ENCODE measurements at regions of chr11 and their contacts with region 1.

Region 1: GRCh38 chr11:62081378-62082291 is 42.2 kb upstream of the INCENP start:
- DNase-seq: peak; percentile 71 to 78 (median 72)
- H3K4me3 ChIP-seq: peak overlapping the region in 2 of 3 experiments; percentile 4 to 52
- H3K4me3 Mint-ChIP-seq: peak overlapping the region; percentile 64 to 76
- H3K27ac ChIP-seq: no peak overlapping the region
- H3K27ac Mint-ChIP-seq: peak overlapping the region in 5 of 7 donors; percentile 62 to 86 (median 79)
- H3K4me1 ChIP-seq: peaks cover 7 to 8% of the 10 kb centered on the region in 2 donors
- H3K4me1 Mint-ChIP-seq: peaks cover 15% of the 10 kb centered on the region
- H3K27me3 ChIP-seq: no peaks in the 10 kb centered on the region
- H3K27me3 Mint-ChIP-seq: peaks cover 3 to 8% (median 5%) of the 10 kb centered on the region in 3 donors
- CTCF ChIP-seq: peak; percentile 94

Region 2: DNA sequence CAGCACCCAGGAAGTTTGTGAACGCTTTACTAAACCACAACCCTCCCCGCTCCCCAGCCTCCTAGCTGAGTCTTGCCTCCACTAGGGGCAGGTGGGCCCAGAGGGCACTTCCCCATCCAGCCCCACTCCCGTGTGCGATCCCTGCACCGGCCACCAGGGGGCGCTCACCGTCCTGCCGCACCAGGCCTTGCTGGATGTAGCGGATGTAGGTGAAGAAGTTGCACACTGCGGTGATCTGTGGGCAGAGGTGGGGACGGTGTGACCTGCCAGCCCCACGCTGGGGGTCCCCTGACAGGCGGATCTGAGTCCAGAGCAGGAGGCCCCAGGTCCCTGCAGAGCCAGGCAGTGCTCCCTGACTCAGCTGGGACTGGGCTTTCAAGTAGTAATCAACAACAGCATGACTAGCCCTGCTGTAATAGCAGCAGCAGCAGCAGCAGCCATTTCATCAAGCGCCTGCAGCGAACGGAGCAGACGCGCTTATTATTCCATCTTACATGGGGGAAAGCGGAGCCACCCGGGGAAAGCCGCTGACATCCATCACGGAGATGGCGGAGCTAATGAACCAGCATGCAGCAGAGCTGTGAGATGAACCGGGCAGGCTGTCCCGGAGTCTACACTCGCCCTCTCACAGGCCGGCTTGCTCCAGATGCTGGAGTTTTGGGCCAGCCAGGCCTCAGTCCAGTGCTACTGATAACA is 182.3 kb before region 1 on chr11:
- intact Hi-C with region 1: loop called in 1 of 2 experiments (anchors 1 kb)
- DNase-seq: peak; percentile 85 to 90 (median 89)
- H3K4me3 ChIP-seq: no peak overlapping the region
- H3K4me3 Mint-ChIP-seq: no peak overlapping the region
- H3K27ac ChIP-seq: no peak overlapping the region
- H3K27ac Mint-ChIP-seq: peak overlapping the region in 4 of 7 donors; percentile 7 to 71 (median 26)
- H3K4me1 ChIP-seq: peaks cover 0 to 21% of the 10 kb centered on the region in 2 donors
- H3K4me1 Mint-ChIP-seq: peaks cover 20% of the 10 kb centered on the region
- H3K27me3 ChIP-seq: peaks cover 0 to 6% of the 10 kb centered on the region in 2 donors
- H3K27me3 Mint-ChIP-seq: peaks cover 2 to 6% (median 6%) of the 10 kb centered on the region in 3 donors
- CTCF ChIP-seq: peak; percentile 99

Region 3: GRCh38 chr11:61947486-61948210 is 134.0 kb before region 1 on chr11:
- intact Hi-C with region 1: loop called (anchors 5 kb)
- DNase-seq: peak; percentile 68 to 83 (median 76)
- H3K4me3 ChIP-seq: no peak overlapping the region
- H3K4me3 Mint-ChIP-seq: no peak overlapping the region
- H3K27ac ChIP-seq: no peak overlapping the region
- H3K27ac Mint-ChIP-seq: no peak overlapping the region
- H3K4me1 ChIP-seq: peaks cover 10 to 12% of the 10 kb centered on the region in 2 donors
- H3K4me1 Mint-ChIP-seq: peaks cover 17% of the 10 kb centered on the region
- H3K27me3 ChIP-seq: no peaks in the 10 kb centered on the region
- H3K27me3 Mint-ChIP-seq: peaks cover 0 to 6% (median 3%) of the 10 kb centered on the region in 3 donors
- CTCF ChIP-seq: peak; percentile 90

Region 4: DNA sequence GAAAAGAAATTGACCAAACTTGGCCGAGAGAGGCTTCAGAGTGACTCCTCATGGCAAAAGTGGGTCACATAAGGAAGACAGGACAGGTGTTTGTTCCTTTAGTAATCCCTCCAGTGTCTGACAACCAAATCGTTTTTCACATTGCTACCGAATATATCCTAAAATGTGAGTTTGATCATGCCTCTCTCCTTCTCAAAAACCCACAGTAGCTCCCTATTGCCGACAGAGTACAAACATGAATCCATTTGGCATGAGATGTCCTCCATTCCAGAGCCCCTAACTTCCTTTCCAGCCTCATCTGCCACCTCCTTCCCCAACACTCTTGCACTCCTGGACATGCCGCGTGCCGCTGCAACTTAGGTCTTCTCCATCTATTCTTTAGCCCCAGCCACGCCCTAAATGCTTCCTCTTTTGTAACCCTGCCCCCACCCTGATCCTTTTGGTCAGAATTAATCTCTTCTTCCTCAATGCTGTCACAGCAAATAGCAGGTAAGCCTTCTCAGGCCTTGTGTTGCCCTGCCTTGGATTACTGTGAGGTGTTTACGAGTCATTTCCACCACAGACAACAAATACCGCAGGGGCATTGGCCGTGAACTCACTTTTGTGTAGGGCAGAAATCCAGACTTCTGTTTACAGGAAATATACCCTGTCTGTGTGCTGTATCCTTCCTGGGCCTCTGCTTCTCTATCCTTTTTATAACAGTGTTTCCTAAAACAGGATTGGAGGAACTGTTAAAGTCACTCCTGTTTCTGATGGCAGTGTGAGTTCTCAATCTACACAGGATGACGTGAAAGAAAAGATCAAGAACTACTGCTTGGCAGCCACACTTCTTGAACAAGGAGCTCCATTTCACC is 48.2 kb before region 1 on chr11:
- intact Hi-C with region 1: loop called in 1 of 2 experiments (anchors 5 kb)
- DNase-seq: peak; percentile 90 to 92 (median 91)
- H3K4me3 ChIP-seq: peak overlapping the region in 1 of 3 experiments; percentile 15
- H3K4me3 Mint-ChIP-seq: peak overlapping the region; percentile 68 to 70
- H3K27ac ChIP-seq: peak overlapping the region; percentile 82 to 94
- H3K27ac Mint-ChIP-seq: peak overlapping the region; percentile 85 to 98 (median 97)
- H3K4me1 ChIP-seq: peaks cover 27 to 34% of the 10 kb centered on the region in 2 donors
- H3K4me1 Mint-ChIP-seq: peaks cover 34% of the 10 kb centered on the region
- H3K27me3 ChIP-seq: no peaks in the 10 kb centered on the region
- H3K27me3 Mint-ChIP-seq: peaks cover 4 to 17% (median 6%) of the 10 kb centered on the region in 3 donors
- CTCF ChIP-seq: no peak

Measured in CD14-positive monocyte (primary cell).